ENCODE measurements at regions of chr12 and their contacts with region 1.

Region 1: GRCh38 chr12:125183187-125184067 is 118.2 kb downstream of the AACS start:
- DNase-seq: peak; percentile 71 to 94
- ATAC-seq: peak; percentile 58 to 84
- H3K4me3 ChIP-seq: no peak overlapping the region
- H3K27ac ChIP-seq: 0 out of 6 replicates have a peak overlapping the region, but pooled peaks of 1 of the 2 experiments have one; percentile 29
- H3K4me1 ChIP-seq: peaks cover 28% of the 10 kb centered on the region
- CTCF ChIP-seq: peak; percentile 92
- EP300 ChIP-seq: no peak
- POLR2A ChIP-seq: no peak
- RAD21 ChIP-seq: peak; percentile 97 to 99

Region 2: DNA sequence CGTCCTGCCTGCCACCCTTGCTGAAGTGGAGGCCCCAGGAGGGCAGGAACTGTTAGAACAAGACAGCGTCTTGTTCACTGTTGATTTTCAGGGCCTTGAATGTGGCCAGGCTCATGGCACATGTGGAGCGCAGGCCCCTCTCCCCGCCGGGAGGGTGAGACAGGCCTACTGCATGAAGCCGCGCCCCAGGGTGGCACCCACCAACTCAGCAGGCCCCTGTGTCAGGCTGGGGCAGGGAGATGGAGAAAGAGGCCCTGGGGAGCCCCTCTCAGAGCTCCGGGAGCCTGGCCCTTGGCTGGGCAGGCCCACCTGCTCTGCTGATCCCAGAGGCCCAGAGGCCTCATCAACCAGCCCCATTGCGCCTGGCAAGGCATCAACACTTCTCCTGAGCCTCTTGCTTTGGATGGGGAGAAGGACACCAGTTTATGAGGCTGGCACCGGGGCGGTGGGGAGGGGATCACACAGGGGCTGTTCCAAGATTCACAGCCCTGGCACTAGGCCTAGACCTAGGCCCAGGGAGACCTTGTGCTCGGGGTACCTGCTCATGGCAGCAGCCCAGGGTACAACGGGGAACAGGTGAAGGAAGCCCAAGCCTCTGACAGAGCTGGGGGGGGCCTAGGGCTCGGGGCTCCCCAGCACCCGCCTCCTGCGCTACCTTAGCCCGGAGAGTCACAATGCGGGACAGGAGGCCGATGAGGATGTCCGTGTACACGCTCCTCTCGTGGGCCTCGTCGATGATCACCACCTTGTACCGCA is 212.6 kb before region 1 on chr12:
- CTCF ChIA-PET with region 1: no interaction called
- POLR2A ChIA-PET with region 1: no interaction called
- DNase-seq: no peak
- ATAC-seq: no peak
- H3K4me3 ChIP-seq: no peak overlapping the region
- H3K27ac ChIP-seq: no peak overlapping the region
- H3K4me1 ChIP-seq: no peaks in the 10 kb centered on the region
- CTCF ChIP-seq: no peak
- EP300 ChIP-seq: no peak
- POLR2A ChIP-seq: no peak
- RAD21 ChIP-seq: no peak

Region 3: DNA sequence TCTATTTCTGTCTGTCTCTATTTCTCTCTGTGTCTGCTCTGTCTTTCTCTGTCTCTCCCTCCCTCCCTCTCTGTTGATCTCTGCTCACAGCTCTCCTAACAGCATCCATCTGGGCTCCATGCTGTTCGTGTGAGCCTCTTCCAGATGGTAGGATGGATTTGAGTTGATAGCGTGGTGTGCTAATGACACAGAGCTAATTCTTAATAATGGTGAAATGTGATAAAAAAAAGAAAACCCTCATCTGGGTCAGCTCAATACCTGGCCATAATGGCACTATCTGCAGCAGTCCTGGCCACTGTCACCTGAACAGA is 21.8 kb before region 1 on chr12:
- CTCF ChIA-PET with region 1: interaction called, 27 read pairs
- POLR2A ChIA-PET with region 1: no interaction called
- DNase-seq: no peak
- ATAC-seq: peak in 1 of 2 experiments; percentile 48; a peak in 3 of 6 replicates
- H3K4me3 ChIP-seq: no peak overlapping the region
- H3K27ac ChIP-seq: no peak overlapping the region
- H3K4me1 ChIP-seq: no peaks in the 10 kb centered on the region
- CTCF ChIP-seq: no peak
- EP300 ChIP-seq: no peak
- POLR2A ChIP-seq: no peak
- RAD21 ChIP-seq: no peak

Region 4: GRCh38 chr12:125172231-125172850 is 11.1 kb before region 1 on chr12:
- CTCF ChIA-PET with region 1: interaction called, 27 read pairs
- POLR2A ChIA-PET with region 1: no interaction called
- DNase-seq: no peak
- ATAC-seq: no peak
- H3K4me3 ChIP-seq: no peak overlapping the region
- H3K27ac ChIP-seq: no peak overlapping the region
- H3K4me1 ChIP-seq: no peaks in the 10 kb centered on the region
- CTCF ChIP-seq: no peak
- EP300 ChIP-seq: no peak
- POLR2A ChIP-seq: no peak
- RAD21 ChIP-seq: no peak

Region 5: GRCh38 chr12:125203145-125203765 is 19.8 kb after region 1 on chr12:
- CTCF ChIA-PET with region 1: interaction called, 14 read pairs
- POLR2A ChIA-PET with region 1: no interaction called
- DNase-seq: peak in 1 of 2 experiments; percentile 65
- ATAC-seq: peak; percentile 48 to 80; a peak in 3 of 6 replicates
- H3K4me3 ChIP-seq: no peak overlapping the region
- H3K27ac ChIP-seq: no peak overlapping the region
- H3K4me1 ChIP-seq: no peaks in the 10 kb centered on the region
- CTCF ChIP-seq: peak; percentile 57
- EP300 ChIP-seq: no peak
- POLR2A ChIP-seq: no peak
- RAD21 ChIP-seq: peak; percentile 22 to 49; a peak in 2 of 5 replicates

Region 6: DNA sequence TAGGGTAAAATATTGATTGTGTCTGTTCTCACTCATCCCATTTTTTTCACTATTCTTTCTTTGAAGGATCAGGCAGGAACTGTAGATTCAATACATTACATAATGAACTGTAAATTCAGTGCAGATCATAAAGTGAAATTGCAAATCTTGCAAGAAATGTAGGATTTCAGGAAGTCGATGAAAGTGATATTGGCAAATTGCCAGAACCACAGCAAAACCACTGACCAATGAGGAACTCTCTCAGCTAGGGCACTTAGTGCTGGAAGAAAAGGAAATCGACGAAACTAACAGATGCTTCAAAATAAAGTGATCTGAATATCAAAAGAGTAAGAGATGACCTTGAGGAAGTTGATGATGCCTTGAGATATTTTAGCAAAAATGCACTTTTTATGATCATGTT is 39.4 kb after region 1 on chr12:
- CTCF ChIA-PET with region 1: no interaction called
- POLR2A ChIA-PET with region 1: no interaction called
- DNase-seq: no peak
- ATAC-seq: no peak
- H3K4me3 ChIP-seq: no peak overlapping the region
- H3K27ac ChIP-seq: no peak overlapping the region
- H3K4me1 ChIP-seq: no peaks in the 10 kb centered on the region
- CTCF ChIP-seq: no peak
- EP300 ChIP-seq: no peak
- POLR2A ChIP-seq: no peak
- RAD21 ChIP-seq: no peak

Region 7: DNA sequence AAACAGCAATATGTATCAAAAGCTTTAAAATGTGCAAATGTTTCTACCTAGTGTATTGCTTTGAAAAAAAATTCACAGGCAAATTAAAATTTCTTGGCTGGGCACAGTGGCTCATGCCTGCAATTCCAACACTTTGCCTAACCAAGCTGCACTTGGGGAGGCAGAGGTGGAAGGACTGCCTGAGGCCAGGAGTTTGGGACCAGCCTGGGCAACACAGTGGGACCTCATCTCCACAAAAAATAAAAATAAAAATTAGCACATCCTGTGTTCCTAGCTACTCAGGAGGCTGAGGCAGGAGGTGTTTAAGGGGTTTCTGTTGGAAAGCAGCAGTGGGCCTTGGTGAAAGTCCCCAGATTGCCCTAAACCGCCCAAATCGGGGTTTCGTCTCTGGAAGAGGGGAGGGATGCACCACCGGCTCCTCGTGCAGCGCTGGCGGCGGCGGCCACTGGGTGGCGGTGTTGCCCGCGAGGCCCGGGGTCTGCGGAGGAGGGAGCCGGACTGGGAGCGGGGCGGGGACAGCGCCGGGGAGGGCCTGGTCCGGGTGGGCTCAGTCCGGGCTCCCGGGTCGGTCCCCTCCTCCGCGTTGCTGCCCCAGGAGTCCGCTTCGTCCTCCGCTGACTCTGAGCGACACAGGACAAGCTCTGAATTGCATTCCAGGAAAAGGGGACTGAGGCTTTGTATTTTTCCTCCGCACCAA is 147.4 kb after region 1 on chr12:
- CTCF ChIA-PET with region 1: interaction called, 10 read pairs
- POLR2A ChIA-PET with region 1: no interaction called
- DNase-seq: peak; percentile 44 to 80
- ATAC-seq: peak; percentile 97 to 100
- H3K4me3 ChIP-seq: peak overlapping the region; percentile 39
- H3K27ac ChIP-seq: peak overlapping the region in 1 of 2 experiments; percentile 78; a peak in 4 of 6 replicates
- H3K4me1 ChIP-seq: no peaks in the 10 kb centered on the region
- CTCF ChIP-seq: peak; percentile 89
- EP300 ChIP-seq: no peak
- POLR2A ChIP-seq: no peak
- RAD21 ChIP-seq: peak; percentile 75 to 87